Cardiac septum (tissue), 1 donor: ENCODE measurements at regions of chr12 and their contacts with region 1.

Region 1: GRCh38 chr12:49060237-49061156 is at the start of gene KMT2D:
- DNase-seq: peak; percentile 96
- total RNA-seq, gene KMT2D: 63.8 TPM

Region 2: GRCh38 chr12:49018261-49019119 is 42.0 kb before region 1 on chr12 and contains the start of gene PRKAG1:
- intact Hi-C with region 1: loop called (anchors 5 kb)
- DNase-seq: peak; percentile 98
- total RNA-seq, gene PRKAG1: 80.4 TPM